Naive thymus-derived CD4-positive, alpha-beta T cell (primary cell): ENCODE measurements at regions of chr14 and their contacts with region 1.

Region 1: DNA sequence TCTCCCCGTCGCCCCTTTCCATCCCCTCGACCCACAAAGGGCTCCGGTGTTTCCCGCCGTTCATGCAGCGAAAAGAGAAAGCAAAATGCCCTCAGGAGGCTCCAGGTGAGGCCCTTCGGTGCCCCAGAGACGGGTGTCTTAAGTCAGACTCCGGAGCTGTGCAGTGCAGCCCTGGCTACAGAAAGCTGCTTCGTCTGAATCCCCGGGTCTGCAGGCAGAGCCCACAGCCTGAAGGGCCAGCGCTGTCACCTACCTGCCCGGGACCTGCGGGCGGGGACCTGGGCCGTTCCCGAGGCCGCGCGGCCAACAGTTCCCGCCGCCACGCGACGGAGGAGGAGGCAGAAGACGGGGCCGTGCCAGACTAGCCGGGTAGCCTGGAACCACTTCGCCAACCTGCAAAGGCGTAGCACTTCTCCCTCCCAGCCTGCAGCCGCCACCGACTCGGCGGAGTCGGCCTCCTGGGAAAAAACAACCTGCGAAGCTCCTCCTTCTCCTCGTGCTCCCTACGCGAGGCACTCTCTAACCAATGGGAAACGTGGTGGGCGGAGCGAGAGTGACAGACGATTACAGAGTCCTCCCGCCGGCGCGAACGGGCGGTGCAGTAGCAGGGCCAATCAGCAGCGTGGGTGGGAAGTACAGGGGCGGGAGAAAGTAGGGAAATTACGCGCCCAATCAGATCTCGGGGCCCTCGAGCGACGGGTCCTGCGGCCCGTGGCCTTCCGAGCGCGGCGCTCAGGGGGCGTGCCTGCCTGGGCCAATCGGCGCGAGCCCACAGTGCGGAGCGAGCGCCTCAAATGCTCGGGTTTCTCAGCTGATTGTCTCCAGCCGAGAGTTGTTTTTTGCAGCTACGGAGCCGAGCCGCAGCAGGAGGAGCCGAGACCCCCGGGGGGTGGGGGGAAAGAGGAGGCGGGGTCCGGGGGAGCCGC is at the starts of genes GPR137C and TXNDC16:
- DNase-seq: peak; percentile 92 to 100 (median 98)
- ATAC-seq: peak; percentile 93
- H3K4me3 ChIP-seq: peak within 1 kb of the TSS; percentile 87
- H3K4me3 Mint-ChIP-seq: peak within 1 kb of the TSS; percentile 91 to 97 (median 96)
- H3K27ac ChIP-seq: peak within 1 kb of the TSS; percentile 90
- H3K27ac Mint-ChIP-seq: peak within 1 kb of the TSS; percentile 82 to 97 (median 94)
- H3K4me1 ChIP-seq: peaks cover 9 to 15% of the 10 kb centered on the region in 2 donors
- H3K4me1 Mint-ChIP-seq: peaks cover 6 to 40% (median 28%) of the 10 kb centered on the region in 7 donors
- H3K27me3 ChIP-seq: no peaks in the 10 kb centered on the region
- H3K27me3 Mint-ChIP-seq: peaks cover 0 to 26% (median 0%) of the 10 kb centered on the region in 5 donors
- total RNA-seq, gene GPR137C: 0.27 to 0.70 (median 0.34) TPM in 3 of 5 experiments, not detected in the others
- total RNA-seq, gene TXNDC16: 6.9 to 15.8 (median 9.1) TPM

Region 2: DNA sequence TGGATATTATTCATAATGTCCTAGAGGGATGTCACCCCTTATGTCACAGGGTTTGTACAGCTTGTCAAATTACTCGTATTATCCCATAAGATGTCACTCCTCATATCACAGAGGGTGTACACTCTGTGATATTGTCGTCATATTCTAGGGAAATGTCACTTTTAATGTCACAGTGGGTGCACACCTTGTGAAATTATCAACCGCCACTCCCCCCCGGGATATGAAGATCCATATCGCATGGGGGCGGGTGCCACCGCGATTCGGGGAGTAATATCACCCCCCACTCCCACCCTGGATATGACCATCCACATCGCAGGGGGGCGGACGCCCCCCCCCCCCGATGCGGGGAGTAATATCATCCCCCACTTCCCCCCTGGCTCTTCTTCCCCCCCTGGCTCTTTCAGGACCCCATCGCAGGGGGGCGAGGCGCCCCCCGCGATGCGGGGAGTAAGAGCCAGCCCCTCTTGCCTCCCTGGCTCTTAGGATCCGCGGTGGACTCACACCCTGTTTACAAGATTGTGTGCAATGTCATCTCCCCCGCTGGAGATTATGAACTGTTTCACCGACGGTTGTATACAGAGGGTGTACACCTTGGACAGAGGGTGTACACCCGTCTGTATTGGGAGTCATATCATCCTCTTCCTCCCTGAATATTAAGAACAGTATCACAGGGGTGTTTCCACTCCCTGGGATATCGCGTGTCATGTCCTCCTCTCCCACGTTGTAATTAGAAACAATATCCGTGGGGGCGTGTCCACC is 807.8 kb before region 1 on chr14:
- CTCF ChIA-PET with region 1: no interaction called
- POLR2A ChIA-PET with region 1: no interaction called
- intact Hi-C with region 1: loop called in 1 of 2 experiments (anchors 10 kb)
- DNase-seq: no peak
- ATAC-seq: no peak
- H3K4me3 ChIP-seq: no peak overlapping the region
- H3K4me3 Mint-ChIP-seq: no peak overlapping the region
- H3K27ac ChIP-seq: no peak overlapping the region
- H3K27ac Mint-ChIP-seq: no peak overlapping the region
- H3K4me1 ChIP-seq: no peaks in the 10 kb centered on the region
- H3K4me1 Mint-ChIP-seq: peaks cover 0 to 1% (median 0%) of the 10 kb centered on the region in 7 donors
- H3K27me3 ChIP-seq: no peaks in the 10 kb centered on the region
- H3K27me3 Mint-ChIP-seq: peaks cover 0 to 6% (median 3%) of the 10 kb centered on the region in 5 donors

Region 3: DNA sequence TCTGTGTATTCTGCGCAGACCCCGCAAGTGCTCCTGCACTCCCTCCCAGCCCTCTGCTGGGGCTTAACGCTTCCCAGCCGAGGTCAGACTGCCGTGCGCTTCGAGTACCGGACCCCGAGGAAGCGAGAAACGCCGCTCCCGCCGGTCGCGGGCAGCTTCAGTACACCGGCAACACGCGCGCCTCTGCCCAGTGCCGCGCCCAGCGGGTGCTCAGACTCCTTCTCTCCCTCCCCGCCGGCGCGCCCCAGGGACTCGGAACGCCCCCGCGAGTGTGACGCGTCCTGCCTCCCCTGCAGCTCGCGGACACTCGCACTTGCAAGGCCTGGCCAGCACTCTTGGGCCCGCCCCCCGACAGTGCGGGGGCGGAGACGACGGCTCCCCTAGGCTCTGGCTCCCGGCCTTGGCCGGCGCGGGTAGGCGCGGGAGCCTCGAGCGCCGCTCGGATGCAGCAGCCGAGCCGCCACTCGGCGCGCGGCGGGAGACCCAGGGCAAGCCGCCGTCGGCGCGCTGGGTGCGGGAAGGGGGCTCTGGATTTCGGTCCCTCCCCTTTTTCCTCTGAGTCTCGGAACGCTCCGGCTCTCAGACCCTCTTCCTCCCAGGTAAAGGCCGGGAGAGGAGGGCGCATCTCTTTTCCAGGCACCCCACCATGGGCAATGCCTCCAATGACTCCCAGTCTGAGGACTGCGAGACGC is 238.3 kb before region 1 on chr14 and contains the start of gene PTGER2:
- CTCF ChIA-PET with region 1: no interaction called
- POLR2A ChIA-PET with region 1: interaction called, 3 read pairs
- intact Hi-C with region 1: loop called (anchors 1 kb)
- DNase-seq: peak; percentile 12 to 91 (median 34)
- ATAC-seq: peak; percentile 79
- H3K4me3 ChIP-seq: peak within 1 kb of the TSS; percentile 80
- H3K4me3 Mint-ChIP-seq: peak within 1 kb of the TSS; percentile 88 to 100 (median 98)
- H3K27ac ChIP-seq: peak within 1 kb of the TSS; percentile 62
- H3K27ac Mint-ChIP-seq: peak within 1 kb of the TSS; percentile 51 to 98 (median 92)
- H3K4me1 ChIP-seq: peaks cover 14 to 26% of the 10 kb centered on the region in 2 donors
- H3K4me1 Mint-ChIP-seq: peaks cover 48 to 81% (median 57%) of the 10 kb centered on the region in 7 donors
- H3K27me3 ChIP-seq: no peaks in the 10 kb centered on the region
- H3K27me3 Mint-ChIP-seq: peaks cover 0 to 5% (median 0%) of the 10 kb centered on the region in 5 donors
- total RNA-seq, gene PTGER2: 1.7 to 162 (median 15.2) TPM

Region 4: GRCh38 chr14:52485350-52485960 is 66.9 kb before region 1 on chr14:
- CTCF ChIA-PET with region 1: no interaction called
- POLR2A ChIA-PET with region 1: no interaction called
- intact Hi-C with region 1: no loop called
- DNase-seq: no peak
- ATAC-seq: no peak
- H3K4me3 ChIP-seq: no peak overlapping the region
- H3K4me3 Mint-ChIP-seq: no peak overlapping the region
- H3K27ac ChIP-seq: no peak overlapping the region
- H3K27ac Mint-ChIP-seq: no peak overlapping the region
- H3K4me1 ChIP-seq: no peaks in the 10 kb centered on the region
- H3K4me1 Mint-ChIP-seq: peaks cover 0 to 9% (median 3%) of the 10 kb centered on the region in 7 donors
- H3K27me3 ChIP-seq: no peaks in the 10 kb centered on the region
- H3K27me3 Mint-ChIP-seq: no peaks in the 10 kb centered on the region

Region 5: GRCh38 chr14:52649511-52649910 is 97.2 kb after region 1 on chr14:
- CTCF ChIA-PET with region 1: no interaction called
- POLR2A ChIA-PET with region 1: interaction called, 3 read pairs
- intact Hi-C with region 1: loop called (anchors 5 kb)
- DNase-seq: no peak
- ATAC-seq: no peak
- H3K4me3 ChIP-seq: no peak overlapping the region
- H3K4me3 Mint-ChIP-seq: no peak overlapping the region
- H3K27ac ChIP-seq: no peak overlapping the region
- H3K27ac Mint-ChIP-seq: peak overlapping the region in 1 of 9 donors; percentile 37
- H3K4me1 ChIP-seq: no peaks in the 10 kb centered on the region
- H3K4me1 Mint-ChIP-seq: peaks cover 0 to 5% (median 0%) of the 10 kb centered on the region in 7 donors
- H3K27me3 ChIP-seq: no peaks in the 10 kb centered on the region
- H3K27me3 Mint-ChIP-seq: no peaks in the 10 kb centered on the region

Region 6: GRCh38 chr14:52741865-52742264 is 189.5 kb after region 1 on chr14:
- CTCF ChIA-PET with region 1: interaction called, 3 read pairs
- POLR2A ChIA-PET with region 1: interaction called, 8 read pairs
- intact Hi-C with region 1: loop called in 1 of 2 experiments (anchors 1 kb)
- DNase-seq: peak in 7 of 9 donors; percentile 13 to 52 (median 40)
- ATAC-seq: peak; percentile 60
- H3K4me3 ChIP-seq: peak overlapping the region; percentile 54
- H3K4me3 Mint-ChIP-seq: peak overlapping the region; percentile 75 to 93 (median 84)
- H3K27ac ChIP-seq: peak overlapping the region; percentile 68
- H3K27ac Mint-ChIP-seq: peak overlapping the region; percentile 92 to 100 (median 96)
- H3K4me1 ChIP-seq: peaks cover 48 to 64% of the 10 kb centered on the region in 2 donors
- H3K4me1 Mint-ChIP-seq: peaks cover 42 to 90% (median 74%) of the 10 kb centered on the region in 7 donors
- H3K27me3 ChIP-seq: no peaks in the 10 kb centered on the region
- H3K27me3 Mint-ChIP-seq: no peaks in the 10 kb centered on the region

Region 7: DNA sequence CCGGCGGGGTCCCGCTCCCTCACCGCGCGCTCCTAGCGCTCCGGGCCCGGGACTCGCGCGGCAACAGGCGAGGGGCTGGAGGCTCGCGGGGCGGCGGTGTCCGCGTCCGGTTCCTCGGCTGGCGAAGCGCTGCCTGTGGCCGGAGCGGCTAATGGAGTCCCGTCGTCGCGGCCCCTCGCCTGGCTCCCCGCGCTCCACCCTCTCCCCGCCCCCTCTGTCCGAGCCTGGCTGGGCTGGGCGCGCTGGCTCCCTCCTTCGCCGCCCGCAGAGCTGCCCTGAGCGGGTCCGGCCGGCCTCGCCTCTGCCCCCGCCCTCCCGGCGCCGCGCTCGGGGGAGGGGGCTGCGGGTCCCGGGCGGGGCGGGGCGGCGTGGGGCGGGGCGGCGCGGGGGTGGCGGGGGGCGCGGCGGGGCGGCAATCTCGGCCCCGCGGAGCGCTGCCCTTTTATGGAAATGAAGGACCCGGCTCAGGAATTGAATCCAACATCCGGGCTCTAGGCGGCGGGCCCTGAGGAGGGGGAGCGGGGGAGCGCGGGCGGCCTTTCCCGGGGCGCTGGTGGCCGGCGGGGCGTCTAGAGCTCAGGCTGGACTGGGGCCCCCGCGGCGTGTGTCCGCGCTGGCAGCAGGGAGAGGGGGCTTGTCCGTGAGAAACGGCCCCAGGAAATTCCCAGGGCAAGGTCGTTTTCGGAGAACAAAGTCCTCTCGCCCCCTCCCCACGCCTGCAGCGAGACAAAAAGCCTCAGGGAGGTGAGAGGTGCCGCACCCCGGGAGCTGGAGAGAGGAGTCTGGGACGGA is 398.8 kb after region 1 on chr14 and contains the start of gene FERMT2:
- CTCF ChIA-PET with region 1: no interaction called
- POLR2A ChIA-PET with region 1: interaction called, 3 read pairs
- intact Hi-C with region 1: loop called in 1 of 2 experiments (anchors 5 kb)
- DNase-seq: peak in 5 of 9 donors; percentile 2 to 49 (median 12)
- ATAC-seq: peak; percentile 51
- H3K4me3 ChIP-seq: peak within 1 kb of the TSS; percentile 67
- H3K4me3 Mint-ChIP-seq: peak within 1 kb of the TSS; percentile 66 to 93 (median 86)
- H3K27ac ChIP-seq: no peak within 1 kb of the TSS
- H3K27ac Mint-ChIP-seq: peak within 1 kb of the TSS in 3 of 9 donors; percentile 14 to 76 (median 33)
- H3K4me1 ChIP-seq: peaks cover 13 to 18% of the 10 kb centered on the region in 2 donors
- H3K4me1 Mint-ChIP-seq: peaks cover 12 to 24% (median 20%) of the 10 kb centered on the region in 7 donors
- H3K27me3 ChIP-seq: peaks cover 32% of the 10 kb centered on the region in 2 donors
- H3K27me3 Mint-ChIP-seq: peaks cover 51 to 73% (median 53%) of the 10 kb centered on the region in 5 donors
- total RNA-seq, gene FERMT2: 0.13 to 0.58 (median 0.33) TPM in 4 of 5 experiments, not detected in the other

Region 8: DNA sequence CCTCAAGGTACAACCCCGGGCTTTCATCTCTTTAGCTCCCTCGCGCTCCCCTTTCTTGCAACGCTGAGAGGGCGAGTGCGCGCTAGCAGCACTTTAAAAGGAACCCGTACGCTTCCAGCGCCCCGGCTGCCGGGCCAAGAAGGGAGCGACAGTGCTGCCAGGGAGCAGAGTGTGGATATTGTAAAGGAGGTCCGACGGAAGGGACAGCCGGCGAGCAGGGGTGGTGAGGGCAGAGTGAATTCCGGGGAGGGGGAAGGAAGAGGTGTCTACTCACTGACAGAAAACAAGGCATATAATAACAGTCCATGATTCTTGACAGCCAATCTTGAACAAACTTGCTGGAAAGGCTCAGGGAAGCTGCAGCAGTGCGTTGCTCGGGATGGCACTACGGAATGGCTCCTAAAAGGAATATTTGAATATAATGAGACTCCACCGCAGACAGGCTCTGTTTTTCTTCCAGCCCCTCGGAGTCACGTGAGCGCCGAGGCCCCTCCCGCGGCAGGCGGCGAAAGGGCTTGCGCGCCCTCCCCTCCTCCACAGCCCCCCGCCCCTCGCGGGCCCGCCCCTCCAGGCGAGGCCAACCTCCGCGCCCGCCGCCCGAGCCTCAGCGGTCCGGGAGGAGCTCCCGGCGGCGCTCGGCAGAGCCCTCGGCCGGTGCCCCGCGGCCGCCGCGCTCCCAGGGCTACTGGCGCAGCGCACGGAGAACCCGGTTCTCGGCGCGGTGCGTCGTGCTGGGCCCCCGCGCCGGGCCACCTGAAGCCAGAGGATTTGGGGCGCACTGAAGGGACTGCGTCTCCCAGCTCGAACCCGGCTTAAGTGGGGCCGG is 1400.9 kb after region 1 on chr14:
- CTCF ChIA-PET with region 1: no interaction called
- POLR2A ChIA-PET with region 1: no interaction called
- intact Hi-C with region 1: loop called in 1 of 2 experiments (anchors 10 kb)
- DNase-seq: peak in 2 of 9 donors; percentile 2 to 24
- ATAC-seq: no peak
- H3K4me3 ChIP-seq: no peak overlapping the region
- H3K4me3 Mint-ChIP-seq: peak overlapping the region; percentile 60 to 92 (median 83)
- H3K27ac ChIP-seq: no peak overlapping the region
- H3K27ac Mint-ChIP-seq: peak overlapping the region in 2 of 9 donors; percentile 20 to 35
- H3K4me1 ChIP-seq: peaks cover 0 to 14% of the 10 kb centered on the region in 2 donors
- H3K4me1 Mint-ChIP-seq: peaks cover 6 to 41% (median 32%) of the 10 kb centered on the region in 7 donors
- H3K27me3 ChIP-seq: peaks cover 0 to 7% of the 10 kb centered on the region in 2 donors
- H3K27me3 Mint-ChIP-seq: peaks cover 54 to 86% (median 71%) of the 10 kb centered on the region in 5 donors